Left ventricle myocardium superior (tissue), 1 donor: ENCODE measurements at regions of chr7 and their contacts with region 1.

Region 1: DNA sequence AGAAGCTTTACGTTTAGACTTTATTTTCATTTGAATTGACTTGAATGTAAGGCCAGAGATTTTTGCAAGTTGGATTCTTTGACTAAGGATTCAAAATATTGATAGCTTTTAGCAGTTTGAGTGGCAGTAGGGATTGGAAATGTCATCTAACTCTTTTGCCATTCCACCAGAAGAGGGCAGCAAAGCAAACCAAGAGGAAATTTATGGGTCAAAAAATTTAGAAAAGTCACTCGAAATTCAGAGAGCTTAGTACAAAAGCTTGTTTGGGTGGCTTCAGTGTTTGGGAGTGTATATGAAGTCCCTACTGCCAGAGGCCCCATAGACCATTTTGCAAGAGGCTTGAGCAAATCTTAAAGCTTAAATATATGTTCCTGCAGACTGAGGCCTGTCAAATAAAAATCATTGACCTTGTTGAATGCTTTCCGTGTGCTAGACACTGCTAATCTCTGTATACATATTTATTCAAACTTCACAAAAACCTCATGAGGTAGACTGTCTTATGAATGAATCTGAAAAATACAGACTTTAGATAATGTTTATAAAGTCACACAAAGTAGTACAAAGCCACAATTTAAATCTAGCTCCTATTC is 44.6 kb upstream of the RSBN1L start:
- DNase-seq: no peak
- ATAC-seq: no peak

Region 2: DNA sequence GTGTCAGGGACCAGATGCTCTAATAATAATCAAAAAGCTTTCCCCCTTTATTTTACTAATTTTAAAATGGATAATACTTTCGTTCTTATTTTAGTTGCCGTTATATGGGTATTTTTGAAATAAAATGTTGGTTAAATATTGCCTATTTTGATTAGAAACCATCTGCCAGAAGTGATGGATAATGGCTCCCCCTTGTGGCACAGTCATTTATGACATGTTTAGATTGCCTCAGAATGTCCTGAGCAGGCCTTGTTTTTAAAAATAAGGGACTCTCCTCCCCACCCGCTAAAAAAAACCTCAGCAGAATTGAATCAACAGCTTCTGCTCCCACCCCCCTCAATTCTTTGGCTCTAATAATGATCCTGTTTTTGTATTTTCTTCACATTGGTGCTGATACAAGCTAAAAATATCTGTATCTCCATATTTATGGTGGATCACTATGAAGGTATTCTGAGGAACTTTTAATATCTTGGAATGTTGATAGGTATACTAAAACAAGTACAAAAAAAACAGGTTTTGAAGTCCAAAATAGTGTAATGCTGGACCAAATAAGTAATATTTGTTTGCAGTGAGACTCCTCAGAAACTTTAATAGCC is 107.7 kb after region 1 on chr7:
- intact Hi-C with region 1: loop called (anchors 2 kb)
- DNase-seq: no peak
- ATAC-seq: peak; percentile 72